B cell (primary cell): ENCODE measurements at regions of chr1 and their contacts with region 1.

Region 1: DNA sequence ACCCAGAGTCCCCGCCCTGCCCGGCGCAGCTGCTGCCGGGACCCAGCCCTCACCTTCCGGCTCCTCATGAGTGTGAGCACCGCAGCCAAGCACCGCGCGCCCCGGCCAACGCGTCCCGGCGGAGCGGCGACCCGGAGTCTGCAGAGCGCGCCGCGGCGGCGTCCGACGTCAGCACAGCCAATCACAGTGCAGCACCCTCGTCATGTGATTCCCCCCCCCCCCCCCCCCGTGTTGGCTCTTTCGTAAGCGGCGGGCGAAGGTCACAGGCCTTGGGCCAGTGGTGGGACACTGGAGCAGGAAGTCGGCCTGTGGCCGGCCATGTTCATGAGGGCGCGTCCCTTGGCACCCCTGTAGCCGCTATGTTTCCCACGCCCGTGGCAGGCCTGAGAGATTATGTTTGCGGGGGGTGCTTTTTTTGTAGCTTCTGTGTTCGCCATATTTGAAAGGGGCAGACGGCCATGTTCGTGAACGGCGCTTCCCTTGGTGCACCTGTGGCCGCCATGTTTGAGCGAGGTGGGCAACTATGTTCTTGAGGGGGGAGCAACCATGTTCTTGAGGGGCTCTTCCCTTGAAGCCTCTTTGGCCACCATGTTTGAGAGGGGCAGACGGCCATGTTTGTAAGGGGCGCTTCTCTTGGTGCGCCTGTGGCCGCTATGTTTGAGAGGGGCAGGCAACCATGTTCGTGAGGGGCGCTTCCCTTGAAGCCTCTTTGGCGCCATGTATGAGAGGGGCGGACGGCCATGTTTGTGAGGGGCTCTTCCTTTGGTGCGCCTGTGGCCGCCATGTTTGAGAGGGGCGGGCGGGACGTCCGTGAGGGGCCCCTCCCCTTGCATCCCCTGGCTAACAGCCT is at the start of gene C1orf174:
- DNase-seq: peak; percentile 99
- ATAC-seq: peak; percentile 76
- H3K4me3 ChIP-seq: peak within 1 kb of the TSS; percentile 59 to 98 (median 84)
- H3K4me3 Mint-ChIP-seq: peak within 1 kb of the TSS; percentile 93
- H3K27ac ChIP-seq: peak within 1 kb of the TSS; percentile 84 to 95
- H3K27ac Mint-ChIP-seq: peak within 1 kb of the TSS; percentile 96
- H3K4me1 ChIP-seq: peaks cover 10 to 25% of the 10 kb centered on the region in 2 donors
- H3K4me1 Mint-ChIP-seq: peaks cover 28% of the 10 kb centered on the region
- H3K27me3 ChIP-seq: no peaks in the 10 kb centered on the region
- H3K27me3 Mint-ChIP-seq: no peaks in the 10 kb centered on the region
- CTCF ChIP-seq: no peak
- total RNA-seq, gene C1orf174: 33.2 and 35.7 TPM in 2 replicates

Region 2: DNA sequence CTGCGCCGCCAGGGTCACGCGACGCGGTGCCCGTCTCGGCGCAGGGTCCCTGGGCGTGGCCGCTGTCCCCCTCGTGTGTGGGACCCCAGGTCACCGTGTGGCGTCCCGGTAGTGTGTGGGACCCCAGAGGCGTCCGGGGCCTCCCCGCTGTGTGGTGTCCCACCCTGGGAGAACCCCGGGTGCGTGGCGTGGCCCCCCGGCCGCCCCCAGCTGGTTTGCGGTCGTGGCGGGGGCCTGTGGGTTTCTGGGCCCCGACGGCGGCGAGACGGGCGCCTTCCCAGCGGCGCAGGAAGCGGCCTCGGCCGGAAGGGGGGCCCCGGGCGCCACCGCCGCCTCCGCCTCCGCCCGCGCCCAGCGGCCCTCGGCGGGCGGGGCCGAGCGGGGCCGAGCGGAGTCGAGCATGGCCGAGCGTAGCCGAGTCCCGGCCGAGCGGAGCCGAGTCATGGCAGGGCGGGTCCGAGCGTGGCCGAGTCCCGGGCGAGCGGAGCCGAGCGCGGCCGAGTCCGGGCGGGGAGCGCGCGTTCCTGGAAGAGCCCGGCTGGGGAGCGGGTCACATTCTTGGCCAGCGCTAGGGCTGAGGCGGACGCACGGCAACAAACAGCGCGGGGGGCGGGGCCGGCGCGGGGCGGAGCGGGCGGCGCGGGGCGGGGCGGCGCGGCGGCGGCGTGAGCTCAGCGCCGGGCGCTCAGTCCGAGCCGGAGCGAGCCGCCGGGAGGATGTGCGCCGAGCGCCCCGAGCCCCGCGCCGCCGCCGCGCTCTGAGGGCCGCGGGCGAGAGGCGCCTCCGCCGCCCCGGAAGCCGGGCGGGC is 1672.8 kb before region 1 on chr1:
- CTCF ChIA-PET with region 1: no interaction called
- POLR2A ChIA-PET with region 1: no interaction called
- intact Hi-C with region 1: loop called (anchors 5 kb)
- DNase-seq: peak; percentile 98
- ATAC-seq: peak; percentile 91
- H3K4me3 ChIP-seq: peak overlapping the region in 4 of 5 experiments; percentile 50 to 65 (median 60)
- H3K4me3 Mint-ChIP-seq: peak overlapping the region; percentile 80
- H3K27ac ChIP-seq: peak overlapping the region; percentile 57 to 83
- H3K27ac Mint-ChIP-seq: peak overlapping the region; percentile 83
- H3K4me1 ChIP-seq: peaks cover 35 to 43% of the 10 kb centered on the region in 2 donors
- H3K4me1 Mint-ChIP-seq: peaks cover 37% of the 10 kb centered on the region
- H3K27me3 ChIP-seq: no peaks in the 10 kb centered on the region
- H3K27me3 Mint-ChIP-seq: no peaks in the 10 kb centered on the region
- CTCF ChIP-seq: no peak

Region 3: GRCh38 chr1:3856908-3857790 is 43.2 kb before region 1 on chr1 and contains the starts of genes CEP104 and DFFB:
- CTCF ChIA-PET with region 1: interaction called, 4 read pairs
- POLR2A ChIA-PET with region 1: interaction called, 14 read pairs
- intact Hi-C with region 1: loop called (anchors 1 kb)
- DNase-seq: peak; percentile 99
- ATAC-seq: peak; percentile 97
- H3K4me3 ChIP-seq: peak within 1 kb of the TSS; percentile 59 to 92 (median 85)
- H3K4me3 Mint-ChIP-seq: peak within 1 kb of the TSS; percentile 98
- H3K27ac ChIP-seq: peak within 1 kb of the TSS; percentile 59 to 68
- H3K27ac Mint-ChIP-seq: peak within 1 kb of the TSS; percentile 93
- H3K4me1 ChIP-seq: peaks cover 20 to 24% of the 10 kb centered on the region in 2 donors
- H3K4me1 Mint-ChIP-seq: peaks cover 31% of the 10 kb centered on the region
- H3K27me3 ChIP-seq: no peaks in the 10 kb centered on the region
- H3K27me3 Mint-ChIP-seq: no peaks in the 10 kb centered on the region
- CTCF ChIP-seq: peak; percentile 46
- total RNA-seq, gene CEP104: 71.8 and 76.2 TPM in 2 replicates
- total RNA-seq, gene DFFB: 17.4 and 20.7 TPM in 2 replicates

Region 4: GRCh38 chr1:3987669-3988235 is 87.4 kb after region 1 on chr1:
- CTCF ChIA-PET with region 1: no interaction called
- POLR2A ChIA-PET with region 1: no interaction called
- intact Hi-C with region 1: no loop called
- DNase-seq: no peak
- ATAC-seq: no peak
- H3K4me3 ChIP-seq: no peak overlapping the region
- H3K4me3 Mint-ChIP-seq: no peak overlapping the region
- H3K27ac ChIP-seq: no peak overlapping the region
- H3K27ac Mint-ChIP-seq: no peak overlapping the region
- H3K4me1 ChIP-seq: no peaks in the 10 kb centered on the region
- H3K4me1 Mint-ChIP-seq: peaks cover 7% of the 10 kb centered on the region
- H3K27me3 ChIP-seq: peaks cover 0 to 6% (median 0%) of the 10 kb centered on the region in 4 experiments
- H3K27me3 Mint-ChIP-seq: peaks cover 1% of the 10 kb centered on the region
- CTCF ChIP-seq: no peak